CD4-positive, alpha-beta memory T cell (primary cell): ENCODE measurements at regions of chr9 and their contacts with region 1.

Region 1: DNA sequence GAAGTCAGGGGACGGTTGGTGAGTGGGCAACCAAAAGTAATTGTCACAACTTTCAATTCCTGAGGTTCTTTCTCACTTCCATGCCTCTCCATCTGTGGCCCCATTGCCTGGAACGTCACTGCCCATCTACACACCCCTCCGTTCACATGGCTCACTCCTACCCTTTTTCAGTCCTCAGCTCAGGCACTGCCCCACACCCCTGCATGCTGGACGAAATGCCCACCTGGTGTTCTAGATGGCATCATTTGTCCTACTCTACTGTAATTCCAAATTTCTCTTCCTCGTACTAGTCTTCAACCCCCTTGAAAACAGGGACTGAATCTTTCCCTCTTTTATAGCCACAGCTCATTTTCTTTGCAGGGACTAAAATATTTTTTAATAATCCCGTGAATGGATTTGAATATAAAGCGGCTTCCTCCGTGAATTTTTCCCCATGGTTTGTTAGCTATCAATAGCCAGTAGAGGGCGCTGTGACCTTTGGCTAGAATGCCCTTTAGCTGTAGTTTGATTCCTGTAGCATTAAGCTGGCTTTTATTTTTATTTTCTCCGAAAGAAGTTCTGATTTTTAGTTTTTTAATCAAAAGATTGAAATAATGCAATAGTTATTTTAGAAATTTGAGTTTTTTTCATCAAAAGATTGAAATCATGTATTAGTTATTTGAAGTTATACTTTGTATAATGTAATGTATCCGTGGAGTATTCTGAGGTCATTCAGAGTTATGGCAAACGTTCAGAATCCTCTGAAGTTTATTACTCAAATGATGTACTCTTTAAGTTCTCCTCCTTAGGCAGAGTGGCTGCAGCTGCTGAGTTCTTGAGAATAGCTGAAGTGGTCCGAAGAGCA is 232.1 kb downstream of the SH3GL2 start:
- DNase-seq: peak in 1 of 5 donors; percentile 10
- H3K4me3 ChIP-seq: no peak overlapping the region
- H3K4me3 Mint-ChIP-seq: no peak overlapping the region
- H3K27ac ChIP-seq: no peak overlapping the region
- H3K27ac Mint-ChIP-seq: no peak overlapping the region
- H3K4me1 ChIP-seq: no peaks in the 10 kb centered on the region
- H3K4me1 Mint-ChIP-seq: no peaks in the 10 kb centered on the region
- H3K27me3 ChIP-seq: no peaks in the 10 kb centered on the region
- H3K27me3 Mint-ChIP-seq: peaks cover 0 to 6% of the 10 kb centered on the region in 2 donors

Region 2: GRCh38 chr9:18692268-18692667 is 881.3 kb after region 1 on chr9:
- CTCF ChIA-PET with region 1: no interaction called
- POLR2A ChIA-PET with region 1: no interaction called
- intact Hi-C with region 1: no loop called
- DNase-seq: no peak
- H3K4me3 ChIP-seq: no peak overlapping the region
- H3K4me3 Mint-ChIP-seq: no peak overlapping the region
- H3K27ac ChIP-seq: no peak overlapping the region
- H3K27ac Mint-ChIP-seq: no peak overlapping the region
- H3K4me1 ChIP-seq: no peaks in the 10 kb centered on the region
- H3K4me1 Mint-ChIP-seq: no peaks in the 10 kb centered on the region
- H3K27me3 ChIP-seq: no peaks in the 10 kb centered on the region
- H3K27me3 Mint-ChIP-seq: peaks cover 2 to 4% of the 10 kb centered on the region in 2 donors

Region 3: DNA sequence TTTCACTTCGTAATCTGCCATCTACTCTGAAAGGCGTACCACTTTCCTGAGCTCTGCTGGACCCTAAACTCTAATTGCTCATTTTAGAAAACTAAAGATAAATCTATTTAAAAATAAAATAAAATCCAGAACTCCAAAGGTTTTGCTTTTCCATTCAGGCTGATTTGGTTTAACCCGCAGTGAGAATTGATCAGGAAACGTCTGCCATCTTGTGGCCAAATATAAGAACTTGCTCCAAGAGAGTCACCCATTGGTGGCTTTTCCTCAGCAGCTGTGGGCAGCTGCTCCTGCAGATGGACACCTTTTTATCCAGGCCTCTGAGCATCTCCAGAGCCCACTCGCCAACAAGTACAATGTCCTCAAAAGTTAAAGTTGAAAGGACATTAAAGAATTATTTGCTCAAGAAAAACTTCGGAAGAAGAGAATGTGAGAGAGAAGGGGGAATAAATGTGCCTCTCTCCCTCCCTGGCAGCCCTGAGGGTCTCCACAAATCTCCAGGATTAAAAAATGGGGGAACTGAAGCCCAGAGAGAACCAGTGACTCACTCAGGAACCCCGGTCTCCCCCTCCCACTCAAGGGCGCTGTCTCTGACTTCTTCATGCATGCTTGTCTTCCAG is 1218.0 kb after region 1 on chr9:
- CTCF ChIA-PET with region 1: no interaction called
- POLR2A ChIA-PET with region 1: no interaction called
- intact Hi-C with region 1: loop called (anchors 5 kb)
- DNase-seq: peak in 4 of 5 donors; percentile 21 to 35 (median 24)
- H3K4me3 ChIP-seq: no peak overlapping the region
- H3K4me3 Mint-ChIP-seq: peak overlapping the region in 1 of 8 donors; percentile 37
- H3K27ac ChIP-seq: no peak overlapping the region
- H3K27ac Mint-ChIP-seq: no peak overlapping the region
- H3K4me1 ChIP-seq: no peaks in the 10 kb centered on the region
- H3K4me1 Mint-ChIP-seq: peaks cover 0 to 2% (median 0%) of the 10 kb centered on the region in 4 donors
- H3K27me3 ChIP-seq: peaks cover 4% of the 10 kb centered on the region
- H3K27me3 Mint-ChIP-seq: peaks cover 4 to 11% of the 10 kb centered on the region in 2 donors